OCI-LY7 (cell line): ENCODE measurements at regions of chr16 and their contacts with region 1.

Region 1: DNA sequence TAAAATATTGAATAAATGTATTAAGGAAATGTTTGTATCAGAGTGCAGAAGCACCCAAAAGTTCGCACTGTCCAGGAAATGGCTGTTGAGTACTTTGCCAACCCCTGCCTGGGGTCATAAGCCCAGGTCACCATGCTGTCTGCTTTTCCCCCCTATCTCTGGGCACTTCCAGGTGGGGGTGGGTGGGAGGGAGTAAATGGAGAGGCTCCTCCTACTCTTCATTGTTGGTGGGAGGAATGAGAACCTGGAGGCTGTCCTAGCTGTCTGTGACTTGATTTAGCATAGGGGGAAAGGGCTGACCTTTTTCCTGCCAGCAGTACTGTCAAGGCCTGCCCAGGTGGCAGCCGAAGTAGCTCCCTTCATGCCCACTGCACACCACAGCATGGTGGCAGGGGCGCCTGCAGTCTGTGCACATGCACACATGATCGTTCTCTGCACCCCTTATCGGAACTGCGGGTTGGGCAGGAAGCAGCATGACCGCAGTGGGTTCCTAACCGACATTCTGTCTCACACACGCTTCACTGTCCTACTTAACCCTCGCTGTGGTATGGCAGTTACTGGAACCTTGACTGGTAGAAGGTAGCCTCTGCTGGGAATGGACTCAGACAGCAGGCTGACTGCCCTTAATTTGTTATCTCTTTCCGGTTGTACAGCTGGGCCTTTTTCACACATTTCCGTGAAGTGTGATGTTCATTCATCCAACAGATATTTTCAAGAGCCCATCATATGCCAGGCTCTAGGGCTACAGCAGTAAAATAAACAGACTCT is 41.5 kb downstream of the LDHD start:
- DNase-seq: peak; percentile 88
- H3K4me3 ChIP-seq: peak overlapping the region; percentile 54
- H3K27ac ChIP-seq: peak overlapping the region; percentile 86
- H3K4me1 ChIP-seq: peaks cover 30% of the 10 kb centered on the region
- CTCF ChIP-seq: no peak

Region 2: DNA sequence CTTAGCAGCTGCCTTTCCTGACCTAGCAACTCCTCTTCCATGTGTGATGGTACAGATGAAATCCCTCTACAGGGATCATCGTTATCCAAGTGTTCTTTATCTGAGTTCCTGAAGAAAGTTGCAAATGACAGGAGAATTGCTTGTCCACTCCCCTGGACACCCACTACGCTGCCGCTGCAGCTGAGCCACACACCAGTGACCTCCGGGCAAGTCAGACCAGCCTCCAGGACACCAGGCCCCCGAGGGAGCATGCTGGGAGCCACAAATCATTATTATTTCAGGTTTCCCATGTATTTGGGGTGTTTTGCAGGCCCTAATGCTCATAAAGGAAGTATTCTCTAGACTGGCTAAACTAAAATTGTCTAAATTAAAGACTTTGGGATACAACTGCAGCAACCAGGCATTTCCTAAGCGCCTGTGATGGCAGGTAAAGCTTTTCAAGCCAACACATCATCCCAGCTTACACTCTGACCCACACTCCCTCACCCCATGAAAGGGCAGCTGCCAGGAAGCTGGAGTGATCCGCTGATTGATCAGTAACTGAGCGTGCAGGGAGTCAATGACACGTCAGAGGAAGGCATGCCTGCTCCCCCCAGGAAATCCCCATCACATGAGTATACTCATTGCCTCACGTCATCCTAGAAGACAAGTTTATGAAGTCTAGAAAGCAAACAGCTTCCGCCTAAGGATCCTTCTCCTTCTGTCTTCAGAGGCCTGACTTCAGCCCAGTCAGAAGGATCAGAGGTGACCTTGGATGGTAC is 314.9 kb before region 1 on chr16:
- CTCF ChIA-PET with region 1: no interaction called
- POLR2A ChIA-PET with region 1: no interaction called
- intact Hi-C with region 1: no loop called
- DNase-seq: no peak
- H3K4me3 ChIP-seq: no peak overlapping the region
- H3K27ac ChIP-seq: no peak overlapping the region
- H3K4me1 ChIP-seq: no peaks in the 10 kb centered on the region
- CTCF ChIP-seq: no peak

Region 3: GRCh38 chr16:75099756-75100602 is 24.9 kb after region 1 on chr16:
- CTCF ChIA-PET with region 1: interaction called, 23 read pairs
- POLR2A ChIA-PET with region 1: interaction called, 3 read pairs
- intact Hi-C with region 1: no loop called
- DNase-seq: peak; percentile 42
- H3K4me3 ChIP-seq: no peak overlapping the region
- H3K27ac ChIP-seq: no peak overlapping the region
- H3K4me1 ChIP-seq: peaks cover 26% of the 10 kb centered on the region
- CTCF ChIP-seq: no peak